ENCODE measurements at regions of chr17 and their contacts with region 1.

Region 1: DNA sequence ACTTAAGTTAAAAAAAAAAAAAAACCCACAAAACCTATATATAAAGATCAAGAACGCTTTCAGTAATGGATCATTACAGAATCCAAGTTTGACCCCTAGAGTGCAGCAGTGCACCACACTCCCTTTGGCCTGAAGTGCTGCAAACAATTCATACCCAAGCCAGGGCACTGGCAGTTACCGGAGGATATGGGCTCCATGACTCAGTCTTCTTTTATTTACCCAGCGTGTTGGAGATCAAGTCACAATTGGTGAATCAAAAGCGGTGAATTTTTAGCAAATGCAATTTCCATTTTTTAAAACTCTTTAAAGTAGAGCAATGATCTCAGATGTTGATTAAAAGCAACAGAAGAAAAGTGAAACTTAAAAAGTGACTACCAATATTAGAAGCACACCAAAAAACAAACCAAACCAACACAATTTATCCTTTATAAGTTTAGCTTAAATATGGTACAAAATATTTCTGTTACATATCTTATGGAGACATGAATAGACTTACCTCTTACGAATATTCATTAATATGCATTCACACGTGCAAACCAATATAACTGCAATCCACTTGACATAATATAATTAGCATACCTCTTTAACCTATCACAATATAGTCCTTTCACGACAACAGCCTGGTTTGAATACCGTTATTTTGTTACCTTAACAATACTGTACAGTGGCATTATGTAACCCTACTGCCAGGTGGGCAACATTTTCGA is 46.3 kb downstream of the ZNF652 start:
- DNase-seq: peak; percentile 72 to 88
- H3K4me3 ChIP-seq: no peak overlapping the region
- H3K27ac ChIP-seq: peak overlapping the region; percentile 14; the same call in 1 of the 2 replicates
- H3K4me1 ChIP-seq: peaks cover 8% of the 10 kb centered on the region
- H3K27me3 ChIP-seq: no peaks in the 10 kb centered on the region
- CTCF ChIP-seq: peak; percentile 94

Region 2: DNA sequence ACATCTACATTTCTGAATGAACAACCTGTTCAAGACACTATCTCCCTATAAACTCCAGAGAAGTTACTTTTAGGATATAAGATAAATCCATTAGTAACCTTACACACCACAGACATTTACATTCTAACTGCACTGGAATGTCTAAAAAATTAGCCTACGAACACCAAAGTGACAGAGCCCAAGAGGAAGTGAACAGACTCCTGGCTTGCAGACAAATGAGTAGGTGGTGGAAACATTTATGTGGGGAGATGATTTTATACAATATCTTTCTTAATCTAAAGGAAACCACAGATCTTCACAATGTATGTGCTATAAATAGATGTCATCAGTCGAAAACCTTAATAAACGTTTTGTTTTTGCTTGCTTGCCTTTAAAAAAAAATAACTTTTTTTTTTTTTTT is 27.6 kb after region 1 on chr17:
- CTCF ChIA-PET with region 1: no interaction called
- POLR2A ChIA-PET with region 1: interaction called, 28 read pairs
- intact Hi-C with region 1: no loop called
- DNase-seq: no peak
- H3K4me3 ChIP-seq: no peak overlapping the region
- H3K27ac ChIP-seq: no peak overlapping the region
- H3K4me1 ChIP-seq: no peaks in the 10 kb centered on the region
- H3K27me3 ChIP-seq: no peaks in the 10 kb centered on the region
- CTCF ChIP-seq: no peak

Region 3: GRCh38 chr17:49390548-49391324 is 75.0 kb after region 1 on chr17:
- CTCF ChIA-PET with region 1: interaction called, 8 read pairs
- POLR2A ChIA-PET with region 1: no interaction called
- intact Hi-C with region 1: loop called (anchors 1 kb)
- DNase-seq: peak; percentile 45 to 86
- H3K4me3 ChIP-seq: peak overlapping the region; percentile 43; the same call in 1 of the 2 replicates
- H3K27ac ChIP-seq: peak overlapping the region; percentile 50
- H3K4me1 ChIP-seq: peaks cover 31% of the 10 kb centered on the region
- H3K27me3 ChIP-seq: no peaks in the 10 kb centered on the region
- CTCF ChIP-seq: no peak

Region 4: GRCh38 chr17:49434821-49435670 is 119.3 kb after region 1 on chr17:
- CTCF ChIA-PET with region 1: no interaction called
- POLR2A ChIA-PET with region 1: no interaction called
- intact Hi-C with region 1: no loop called
- DNase-seq: peak; percentile 46 to 62
- H3K4me3 ChIP-seq: no peak overlapping the region
- H3K27ac ChIP-seq: no peak overlapping the region
- H3K4me1 ChIP-seq: no peaks in the 10 kb centered on the region
- H3K27me3 ChIP-seq: peaks cover 74% of the 10 kb centered on the region
- CTCF ChIP-seq: peak; percentile 94

Region 5: GRCh38 chr17:49515196-49515770 is 199.6 kb after region 1 on chr17:
- CTCF ChIA-PET with region 1: interaction called, 12 read pairs
- POLR2A ChIA-PET with region 1: no interaction called
- intact Hi-C with region 1: no loop called
- DNase-seq: peak; percentile 65 to 81
- H3K4me3 ChIP-seq: no peak overlapping the region
- H3K27ac ChIP-seq: no peak overlapping the region
- H3K4me1 ChIP-seq: peaks cover 8% of the 10 kb centered on the region; the same call in 1 of the 2 replicates
- H3K27me3 ChIP-seq: no peaks in the 10 kb centered on the region
- CTCF ChIP-seq: no peak

Region 6: DNA sequence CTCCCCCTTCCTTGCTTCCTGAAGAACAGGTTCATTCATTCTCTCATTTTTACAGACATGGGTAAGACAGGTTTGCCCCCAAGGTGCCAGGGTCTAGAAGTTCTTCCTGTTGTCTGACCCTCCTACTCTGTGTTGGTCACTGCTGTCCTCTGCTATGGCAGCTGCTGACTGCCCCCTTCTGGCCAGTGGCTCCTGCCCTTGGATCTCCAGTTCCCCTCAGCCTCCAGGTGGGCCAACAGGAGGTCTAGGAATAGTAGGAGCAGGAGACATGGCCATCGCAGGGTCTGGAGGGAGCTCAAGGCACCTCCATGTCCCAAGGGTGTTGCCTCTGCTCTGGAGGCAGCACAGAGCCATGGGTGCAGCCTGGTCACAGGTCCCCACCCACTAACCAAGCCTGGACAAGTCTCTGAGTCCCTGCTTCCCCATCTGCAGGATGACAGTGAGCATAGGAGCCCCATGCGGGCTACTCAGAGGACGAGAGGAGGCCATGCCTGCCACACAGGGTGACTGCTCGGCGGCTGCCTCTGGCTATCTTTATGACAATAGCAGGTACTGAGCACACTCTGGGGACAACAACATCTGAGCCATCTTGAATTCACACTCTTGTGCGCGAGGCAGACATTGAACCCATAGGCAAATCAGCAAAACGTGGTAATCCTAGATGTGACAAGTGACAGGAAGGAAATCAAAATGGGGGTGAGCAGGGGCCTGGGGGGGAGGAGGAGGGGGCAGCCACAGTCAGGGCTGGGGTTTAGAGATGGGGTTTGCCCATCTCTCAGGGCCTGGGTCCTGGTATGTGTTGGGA is 233.0 kb after region 1 on chr17:
- CTCF ChIA-PET with region 1: no interaction called
- POLR2A ChIA-PET with region 1: no interaction called
- intact Hi-C with region 1: loop called (anchors 2 kb)
- DNase-seq: peak in 1 of 2 experiments; percentile 53
- H3K4me3 ChIP-seq: no peak overlapping the region
- H3K27ac ChIP-seq: no peak overlapping the region
- H3K4me1 ChIP-seq: no peaks in the 10 kb centered on the region
- H3K27me3 ChIP-seq: peaks cover 10% of the 10 kb centered on the region; the same call in 1 of the 2 replicates
- CTCF ChIP-seq: peak; percentile 79